Panc1 (cell line): ENCODE measurements at regions of chr10 and their contacts with region 1.

Region 1: DNA sequence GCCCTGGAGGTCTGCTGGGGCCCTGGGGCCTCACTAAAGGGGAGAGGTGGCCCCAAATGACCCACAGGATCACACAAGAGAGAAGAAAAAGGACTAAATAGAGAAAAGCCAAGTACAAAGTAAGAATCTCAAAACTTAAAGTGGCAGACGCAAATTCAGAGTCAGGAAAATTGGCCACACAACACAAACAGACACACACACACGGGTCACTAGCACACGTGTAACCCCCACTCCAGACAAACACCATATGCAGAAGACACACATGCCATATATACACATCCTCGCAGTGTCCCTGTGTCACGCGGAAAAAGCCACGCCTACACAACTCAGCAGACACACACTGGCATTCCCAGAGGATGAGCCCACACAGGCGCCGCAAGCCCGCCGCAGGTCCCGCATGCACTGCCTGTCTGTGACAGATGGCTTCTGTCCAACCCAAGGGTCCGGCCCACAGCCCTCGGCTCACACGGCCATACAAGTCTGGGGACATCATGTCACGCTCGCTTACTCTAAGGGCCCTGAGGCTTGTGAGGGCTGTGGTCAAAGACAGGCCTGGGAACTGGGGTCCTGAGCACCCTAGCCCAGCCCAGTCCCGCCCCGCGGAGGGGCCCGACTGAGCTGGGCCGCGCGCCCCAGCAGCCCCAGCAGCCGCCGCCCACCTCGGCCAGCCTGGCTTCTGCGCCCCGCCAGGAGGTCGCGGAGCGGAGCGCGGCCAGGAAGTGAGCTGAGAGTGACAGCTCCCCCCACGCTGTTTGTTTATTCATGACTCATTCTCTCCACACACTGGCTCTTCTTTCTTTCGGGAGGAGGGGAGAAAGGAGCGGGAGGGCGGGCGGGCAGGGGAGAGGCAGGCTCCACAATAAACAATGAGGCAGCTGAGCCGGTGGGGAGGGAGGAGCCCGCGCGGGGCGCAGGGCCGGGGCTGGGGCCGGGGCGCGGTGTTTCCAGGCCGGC is 95.5 kb upstream of the ZMIZ1 start:
- DNase-seq: peak; percentile 70
- ATAC-seq: peak; percentile 82
- H3K4me3 ChIP-seq: peak overlapping the region; percentile 44 to 56
- H3K27ac ChIP-seq: peak overlapping the region; percentile 90
- H3K4me1 ChIP-seq: peaks cover 34% of the 10 kb centered on the region
- H3K27me3 ChIP-seq: no peaks in the 10 kb centered on the region
- CTCF ChIP-seq: no peak

Region 2: DNA sequence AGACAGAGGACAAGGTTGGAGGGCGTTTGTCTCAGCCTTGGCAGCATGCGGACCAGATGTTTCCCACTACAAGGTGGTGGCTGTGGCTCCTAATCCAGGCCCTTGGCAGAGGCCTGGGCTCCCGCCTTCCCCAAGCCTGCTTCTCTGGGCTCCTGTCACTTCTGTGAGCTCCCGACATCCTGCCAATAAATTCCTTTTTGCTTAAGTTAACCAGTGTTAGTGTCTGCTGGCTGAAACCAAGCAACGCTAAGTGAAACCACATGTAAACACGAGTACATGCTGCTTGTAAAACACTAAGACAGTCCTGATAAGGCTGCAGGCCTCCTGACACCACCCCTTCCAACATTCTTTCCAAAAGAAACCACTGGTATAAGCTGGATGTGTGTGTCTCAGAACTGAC is 168.0 kb before region 1 on chr10:
- CTCF ChIA-PET with region 1: no interaction called
- POLR2A ChIA-PET with region 1: interaction called, 21 read pairs
- in situ Hi-C with region 1: no loop called
- intact Hi-C with region 1: no loop called
- DNase-seq: no peak
- ATAC-seq: peak; percentile 75
- H3K4me3 ChIP-seq: no peak overlapping the region
- H3K27ac ChIP-seq: no peak overlapping the region
- H3K4me1 ChIP-seq: no peaks in the 10 kb centered on the region; the same call in 1 of the 2 replicates
- H3K27me3 ChIP-seq: no peaks in the 10 kb centered on the region; the same call in 1 of the 2 replicates
- CTCF ChIP-seq: no peak

Region 3: DNA sequence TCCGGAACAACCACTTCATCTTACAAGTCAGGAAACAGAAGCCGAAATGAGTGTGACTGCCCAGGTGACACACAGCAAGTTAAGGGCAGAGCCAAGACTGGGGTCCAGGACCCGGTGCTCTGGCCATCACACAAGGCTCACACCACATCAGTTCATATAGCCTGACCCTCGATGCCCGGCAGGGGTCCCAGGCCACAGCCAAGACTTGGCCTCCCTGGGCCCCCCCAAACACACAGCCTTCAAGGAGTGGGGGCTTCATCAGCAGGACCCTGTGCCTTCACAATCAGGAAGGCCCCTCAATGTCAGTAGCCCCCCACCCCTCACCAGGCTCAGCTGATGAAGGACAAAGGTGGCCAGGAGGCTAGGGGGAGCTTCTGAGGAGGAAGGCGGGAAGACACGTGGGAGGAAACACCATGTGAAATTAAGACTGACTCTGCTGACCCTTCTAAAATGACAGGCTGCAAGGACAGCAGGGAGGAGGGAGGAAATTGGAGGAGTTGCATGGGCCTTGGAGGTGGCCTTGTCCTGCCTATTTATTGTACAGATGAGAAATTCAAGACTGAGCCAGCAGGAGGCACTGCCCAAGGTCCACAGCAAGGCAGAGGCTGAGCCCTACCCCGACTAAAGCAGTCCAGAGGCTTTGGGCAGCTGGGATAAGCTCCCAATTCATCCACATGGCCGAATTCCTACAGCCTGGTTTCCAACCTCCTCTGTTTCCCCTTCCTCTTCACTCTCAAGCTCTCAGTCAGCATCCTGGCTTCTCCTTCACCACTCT is 120.6 kb before region 1 on chr10:
- CTCF ChIA-PET with region 1: no interaction called
- POLR2A ChIA-PET with region 1: no interaction called
- in situ Hi-C with region 1: no loop called
- intact Hi-C with region 1: no loop called
- DNase-seq: no peak
- ATAC-seq: peak; percentile 57; the same call in 1 of the 2 replicates
- H3K4me3 ChIP-seq: no peak overlapping the region
- H3K27ac ChIP-seq: no peak overlapping the region
- H3K4me1 ChIP-seq: no peaks in the 10 kb centered on the region
- H3K27me3 ChIP-seq: no peaks in the 10 kb centered on the region
- CTCF ChIP-seq: no peak

Region 4: DNA sequence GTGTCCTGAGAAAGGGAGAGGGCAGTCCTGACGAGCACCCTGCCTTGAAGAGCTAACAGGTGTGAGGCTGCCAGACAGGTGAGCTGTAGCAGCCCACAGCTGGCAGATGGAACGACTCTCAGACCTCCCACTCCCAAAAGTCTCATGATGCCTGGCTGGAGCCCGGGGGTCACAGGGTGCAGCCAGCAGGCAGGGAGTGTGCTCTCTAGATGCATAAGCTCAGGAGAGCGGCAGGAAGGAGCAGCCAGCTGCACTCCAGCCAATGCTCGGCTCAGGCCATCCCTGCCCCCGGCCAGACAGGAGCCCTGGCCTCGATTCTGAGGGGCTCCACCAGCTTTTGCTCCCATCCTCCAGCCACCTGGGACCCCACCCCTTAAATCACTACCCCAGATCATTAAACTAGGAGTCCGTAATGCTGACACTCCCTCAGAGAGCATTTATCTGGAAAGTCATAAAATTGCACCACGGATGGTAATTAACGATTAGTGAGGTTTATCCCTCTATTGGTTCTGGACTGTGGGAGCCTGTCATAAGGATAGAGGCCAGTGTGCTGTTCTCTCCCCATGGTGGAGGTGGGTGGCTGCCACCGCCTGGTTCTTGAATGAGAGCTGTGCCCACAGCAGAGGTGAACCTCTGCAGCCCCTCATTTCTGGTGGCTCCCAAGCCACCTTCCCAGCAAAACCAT is 32.0 kb after region 1 on chr10:
- CTCF ChIA-PET with region 1: interaction called, 10 read pairs
- POLR2A ChIA-PET with region 1: no interaction called
- in situ Hi-C with region 1: no loop called
- intact Hi-C with region 1: no loop called
- DNase-seq: no peak
- ATAC-seq: no peak
- H3K4me3 ChIP-seq: no peak overlapping the region
- H3K27ac ChIP-seq: no peak overlapping the region
- H3K4me1 ChIP-seq: no peaks in the 10 kb centered on the region
- H3K27me3 ChIP-seq: no peaks in the 10 kb centered on the region
- CTCF ChIP-seq: no peak

Region 5: DNA sequence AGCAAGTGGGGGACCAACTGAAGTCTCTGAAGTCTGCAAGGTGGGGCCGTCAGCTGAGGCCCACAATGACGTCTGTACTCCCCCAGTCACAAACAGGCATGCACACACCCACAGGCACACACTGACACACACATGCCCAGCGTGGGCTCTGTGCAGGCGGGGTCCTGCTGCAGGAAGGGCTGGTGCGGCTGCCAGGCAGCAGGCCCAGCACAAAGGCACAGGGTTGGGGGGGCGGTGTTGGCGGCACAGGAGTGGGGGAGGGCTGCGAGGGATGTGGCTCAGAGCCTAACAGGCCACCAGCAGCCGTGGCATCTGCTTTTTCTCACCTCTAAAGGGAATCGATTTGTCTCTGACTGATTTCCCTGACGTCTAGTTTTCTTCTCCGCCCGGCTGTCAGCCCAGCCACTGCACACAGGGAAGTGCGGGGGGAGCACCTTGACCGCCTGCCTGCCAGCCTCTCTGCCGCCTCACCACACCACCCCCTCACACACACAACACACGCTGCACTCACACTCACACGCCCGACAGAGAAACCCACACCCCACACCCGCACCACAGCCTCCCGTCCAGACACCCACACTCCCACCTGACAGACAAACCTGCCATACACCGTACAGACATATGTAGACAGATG is 52.1 kb after region 1 on chr10:
- CTCF ChIA-PET with region 1: no interaction called
- POLR2A ChIA-PET with region 1: no interaction called
- in situ Hi-C with region 1: no loop called
- intact Hi-C with region 1: no loop called
- DNase-seq: no peak
- ATAC-seq: no peak
- H3K4me3 ChIP-seq: no peak overlapping the region
- H3K27ac ChIP-seq: no peak overlapping the region
- H3K4me1 ChIP-seq: no peaks in the 10 kb centered on the region
- H3K27me3 ChIP-seq: no peaks in the 10 kb centered on the region
- CTCF ChIP-seq: no peak

Region 6: DNA sequence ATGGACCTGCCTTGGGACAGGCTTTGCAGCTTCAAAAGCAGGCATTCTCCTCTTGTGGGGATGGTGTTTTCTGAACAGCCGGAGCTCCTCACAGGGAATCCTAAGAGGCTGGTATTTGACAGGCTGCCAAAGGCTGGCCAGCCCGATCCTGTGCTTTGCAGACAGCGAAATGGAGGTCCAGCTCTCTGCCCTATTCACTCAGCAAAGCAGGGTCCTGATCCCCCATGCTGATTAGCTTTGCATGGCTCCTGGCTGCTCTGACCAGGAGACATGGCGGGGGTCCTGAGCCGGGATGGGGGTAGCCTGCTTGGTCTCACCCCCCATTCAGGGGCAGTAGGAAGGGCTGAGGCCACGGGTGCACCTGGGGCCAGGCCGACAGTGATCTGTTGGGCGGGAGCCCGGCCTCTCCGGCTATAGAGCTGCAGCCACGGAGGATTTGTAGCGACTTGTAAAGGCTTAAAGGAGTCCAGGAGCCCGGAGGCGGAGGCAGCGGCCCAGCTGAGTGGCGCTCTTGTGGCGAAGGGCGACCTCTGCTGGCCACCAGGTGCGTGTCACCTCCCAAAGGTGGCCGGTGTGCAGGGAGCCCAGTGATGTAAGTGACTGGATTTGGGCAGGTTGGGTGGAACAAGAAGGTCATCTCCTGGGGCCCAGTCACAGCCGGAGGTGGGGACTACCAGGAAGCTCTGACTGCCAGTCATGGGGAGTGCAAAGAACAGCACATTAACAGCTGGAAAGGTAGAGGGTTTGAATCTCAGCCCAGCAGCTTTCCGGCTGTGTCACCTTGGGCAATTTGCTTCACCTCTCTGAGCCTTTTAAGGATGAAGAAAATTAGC is 222.1 kb after region 1 on chr10:
- CTCF ChIA-PET with region 1: interaction called, 10 read pairs
- POLR2A ChIA-PET with region 1: no interaction called
- in situ Hi-C with region 1: no loop called
- intact Hi-C with region 1: loop called (anchors 5 kb)
- DNase-seq: peak; percentile 30
- ATAC-seq: peak; percentile 86
- H3K4me3 ChIP-seq: no peak overlapping the region
- H3K27ac ChIP-seq: no peak overlapping the region
- H3K4me1 ChIP-seq: peaks cover 24% of the 10 kb centered on the region
- H3K27me3 ChIP-seq: no peaks in the 10 kb centered on the region
- CTCF ChIP-seq: peak; percentile 98